GM23248 (cell line): ENCODE measurements at regions of chr16 and their contacts with region 1.

Region 1: GRCh38 chr16:75789237-75789636 is 62.9 kb upstream of the CPHXL start:
- DNase-seq: peak; percentile 66
- H3K4me3 ChIP-seq: no peak overlapping the region
- H3K27ac ChIP-seq: no peak overlapping the region
- H3K4me1 ChIP-seq: no peaks in the 10 kb centered on the region
- H3K27me3 ChIP-seq: no peaks in the 10 kb centered on the region

Region 2: DNA sequence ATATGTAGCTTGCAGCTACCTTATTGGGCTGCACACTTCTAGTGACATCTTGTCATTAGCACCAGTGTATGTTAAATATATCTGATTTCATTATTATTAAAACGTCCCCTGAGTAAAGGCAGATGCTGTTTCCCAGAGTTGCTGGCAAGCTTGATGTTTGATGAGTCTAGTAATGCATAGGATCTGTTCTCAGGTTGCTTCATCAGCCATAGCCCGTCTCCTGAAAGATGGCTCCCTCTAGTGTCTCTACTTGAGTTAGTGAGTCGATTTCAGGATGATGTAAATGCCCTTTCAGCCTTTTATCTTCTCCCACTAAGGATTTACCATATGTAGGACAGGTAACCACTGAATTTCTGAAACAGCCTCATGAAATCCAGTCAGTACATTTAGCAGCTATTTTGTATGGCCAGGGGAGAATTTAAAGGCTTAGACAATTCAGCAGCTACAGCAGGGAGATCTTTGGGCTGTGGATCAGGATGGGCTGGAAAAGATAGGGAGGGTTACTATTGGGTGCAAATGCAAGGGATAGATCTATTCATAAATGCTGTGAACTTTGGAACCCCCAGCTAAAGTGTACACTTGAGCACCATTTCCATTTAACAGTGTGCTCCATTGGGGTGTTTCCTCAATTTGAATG is 864.3 kb after region 1 on chr16:
- in situ Hi-C with region 1: loop called (anchors 25 kb)
- DNase-seq: peak; percentile 48
- H3K4me3 ChIP-seq: no peak overlapping the region
- H3K27ac ChIP-seq: no peak overlapping the region
- H3K4me1 ChIP-seq: no peaks in the 10 kb centered on the region
- H3K27me3 ChIP-seq: no peaks in the 10 kb centered on the region

Region 3: DNA sequence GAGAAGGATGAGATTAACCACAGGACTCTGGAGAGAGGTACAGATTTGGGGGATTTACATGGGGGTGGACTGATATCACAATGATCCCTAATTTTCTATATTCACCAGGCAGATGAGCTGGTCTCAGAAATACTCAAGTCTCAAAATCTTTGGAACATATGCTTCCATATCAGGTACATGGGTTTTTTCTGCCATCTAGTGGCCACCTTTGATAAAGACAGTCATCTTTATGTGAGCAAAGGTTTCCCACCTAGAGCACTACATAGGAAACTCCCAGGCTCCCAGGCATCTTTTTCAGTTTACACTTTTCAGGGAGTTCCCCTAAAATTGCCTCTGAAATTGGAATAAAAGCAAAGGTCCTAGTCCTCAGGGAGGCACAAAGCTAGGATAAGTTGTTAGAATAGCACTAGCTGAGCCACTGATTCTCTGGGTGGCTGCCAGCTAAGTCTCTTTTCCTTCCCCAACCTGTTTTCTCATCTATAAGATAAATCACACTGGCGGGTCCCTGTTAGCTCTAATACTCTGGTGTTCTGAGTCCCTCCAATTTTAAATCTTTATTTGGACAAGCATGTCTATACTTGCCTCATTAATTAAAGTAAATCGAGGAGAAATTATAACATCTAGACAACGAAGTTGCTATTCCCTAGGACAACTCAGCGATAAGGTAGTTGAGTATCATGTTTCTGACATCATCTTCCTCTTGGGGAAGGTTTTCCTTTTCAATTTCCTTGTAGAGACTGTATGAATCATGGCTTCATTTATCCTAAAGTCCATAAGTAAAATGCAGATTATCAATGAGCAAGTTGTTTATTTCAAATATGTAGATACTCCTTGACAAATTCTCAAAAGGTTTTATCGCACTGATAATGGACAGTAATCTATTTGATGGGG is 1382.8 kb after region 1 on chr16:
- in situ Hi-C with region 1: loop called (anchors 5 kb)
- DNase-seq: peak; percentile 68
- H3K4me3 ChIP-seq: no peak overlapping the region
- H3K27ac ChIP-seq: no peak overlapping the region
- H3K4me1 ChIP-seq: no peaks in the 10 kb centered on the region
- H3K27me3 ChIP-seq: no peaks in the 10 kb centered on the region; the same call in none of the 2 replicates